CD8-positive, alpha-beta T cell (primary cell): ENCODE measurements at regions of chr12 and their contacts with region 1.

Region 1: GRCh38 chr12:98618952-98619351 is 25.5 kb downstream of the SLC25A3 start:
- DNase-seq: no peak
- ATAC-seq: no peak
- H3K4me3 ChIP-seq: no peak overlapping the region
- H3K4me3 Mint-ChIP-seq: no peak overlapping the region
- H3K27ac ChIP-seq: no peak overlapping the region
- H3K27ac Mint-ChIP-seq: no peak overlapping the region
- H3K4me1 ChIP-seq: no peaks in the 10 kb centered on the region
- H3K4me1 Mint-ChIP-seq: peaks cover 2% of the 10 kb centered on the region
- H3K27me3 ChIP-seq: no peaks in the 10 kb centered on the region
- H3K27me3 Mint-ChIP-seq: no peaks in the 10 kb centered on the region
- CTCF ChIP-seq: no peak

Region 2: DNA sequence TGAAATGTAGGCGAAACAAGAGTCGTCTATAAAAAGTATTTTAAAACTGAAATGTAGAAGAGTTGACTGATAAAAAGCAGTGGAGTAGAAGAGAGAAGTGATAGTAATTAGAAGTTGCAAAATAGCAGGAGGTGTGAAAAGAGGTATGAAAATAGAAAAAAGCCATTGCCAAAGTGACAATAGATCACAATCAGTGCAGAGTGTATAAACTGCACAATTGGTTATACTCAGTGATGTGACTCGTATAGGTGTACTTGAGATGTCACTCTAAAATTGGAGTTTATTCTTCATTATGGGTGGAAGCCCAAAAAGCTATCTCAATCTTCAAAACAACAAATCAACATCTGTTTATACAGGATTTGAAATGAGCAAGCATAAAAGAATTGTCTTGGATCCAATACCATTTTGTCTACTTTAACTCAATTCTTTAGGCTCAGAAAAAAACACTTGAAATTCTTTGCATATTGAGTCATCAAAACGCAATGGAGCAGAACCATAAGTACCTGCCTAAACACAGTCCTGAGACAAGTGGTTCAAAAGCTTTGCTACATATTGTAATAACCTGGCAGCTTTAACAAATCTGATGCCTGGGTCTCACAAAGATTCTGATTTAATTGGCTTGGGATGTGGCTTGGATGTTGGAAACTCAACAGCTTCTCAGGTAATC is 16.8 kb after region 1 on chr12:
- CTCF ChIA-PET with region 1: interaction called, 3 read pairs
- POLR2A ChIA-PET with region 1: interaction called, 4 read pairs
- intact Hi-C with region 1: loop called in 1 of 2 experiments (anchors 2 kb)
- DNase-seq: no peak
- ATAC-seq: no peak
- H3K4me3 ChIP-seq: no peak overlapping the region
- H3K4me3 Mint-ChIP-seq: no peak overlapping the region
- H3K27ac ChIP-seq: no peak overlapping the region
- H3K27ac Mint-ChIP-seq: no peak overlapping the region
- H3K4me1 ChIP-seq: no peaks in the 10 kb centered on the region
- H3K4me1 Mint-ChIP-seq: peaks cover 12% of the 10 kb centered on the region
- H3K27me3 ChIP-seq: no peaks in the 10 kb centered on the region
- H3K27me3 Mint-ChIP-seq: no peaks in the 10 kb centered on the region
- CTCF ChIP-seq: no peak

Region 3: DNA sequence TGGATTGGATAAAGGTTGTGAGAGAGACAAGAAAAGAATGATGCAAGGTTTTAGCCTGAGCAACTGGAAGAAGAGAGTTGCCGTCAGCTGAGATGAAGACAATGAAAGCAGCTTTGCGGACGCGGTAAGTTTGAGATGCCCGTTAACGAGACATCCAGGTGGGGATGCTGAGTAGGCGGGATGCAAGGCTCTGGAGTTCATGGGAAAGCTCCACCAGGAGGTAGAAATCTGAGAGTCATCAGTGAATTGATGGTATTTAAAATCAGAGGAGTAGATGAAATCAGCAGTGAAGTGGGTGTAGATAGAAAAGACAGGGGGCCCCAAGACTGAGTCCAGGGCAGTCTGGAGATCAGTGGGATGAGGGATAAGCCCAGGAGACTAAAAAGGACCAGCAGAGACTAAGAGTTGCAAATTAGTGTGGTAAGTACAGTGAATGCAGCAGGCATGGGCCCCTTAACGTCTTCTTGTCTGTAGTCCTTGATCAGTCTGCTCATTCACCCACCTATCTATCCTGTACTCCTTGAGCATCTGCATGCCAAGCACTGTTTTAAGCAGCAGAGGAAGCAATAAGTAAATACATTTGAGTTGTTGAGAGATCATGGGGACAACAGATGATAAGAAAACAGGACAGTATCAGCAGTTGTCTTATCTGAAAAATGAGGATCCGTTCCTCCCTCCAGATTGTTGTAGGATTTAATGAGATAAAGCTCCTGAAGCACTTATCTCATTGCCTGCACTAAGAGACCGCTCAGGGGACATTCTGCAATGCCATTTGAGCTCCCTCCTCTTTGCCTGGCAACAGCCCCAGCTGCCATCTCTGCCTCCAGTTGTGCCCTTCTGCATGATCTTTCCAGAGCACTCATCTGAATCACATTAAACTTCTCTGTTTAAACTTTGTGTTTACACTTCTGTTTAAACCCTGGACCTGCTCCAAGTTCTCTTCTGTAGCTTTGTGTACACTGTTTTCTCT is 117.7 kb after region 1 on chr12:
- CTCF ChIA-PET with region 1: no interaction called
- POLR2A ChIA-PET with region 1: no interaction called
- intact Hi-C with region 1: no loop called
- DNase-seq: no peak
- ATAC-seq: no peak
- H3K4me3 ChIP-seq: no peak overlapping the region
- H3K4me3 Mint-ChIP-seq: no peak overlapping the region
- H3K27ac ChIP-seq: no peak overlapping the region
- H3K27ac Mint-ChIP-seq: no peak overlapping the region
- H3K4me1 ChIP-seq: no peaks in the 10 kb centered on the region
- H3K4me1 Mint-ChIP-seq: no peaks in the 10 kb centered on the region
- H3K27me3 ChIP-seq: no peaks in the 10 kb centered on the region
- H3K27me3 Mint-ChIP-seq: peaks cover 6% of the 10 kb centered on the region
- CTCF ChIP-seq: no peak